Ascending aorta (tissue), 2 donors: ENCODE measurements at regions of chr7 and their contacts with region 1.

Region 1: DNA sequence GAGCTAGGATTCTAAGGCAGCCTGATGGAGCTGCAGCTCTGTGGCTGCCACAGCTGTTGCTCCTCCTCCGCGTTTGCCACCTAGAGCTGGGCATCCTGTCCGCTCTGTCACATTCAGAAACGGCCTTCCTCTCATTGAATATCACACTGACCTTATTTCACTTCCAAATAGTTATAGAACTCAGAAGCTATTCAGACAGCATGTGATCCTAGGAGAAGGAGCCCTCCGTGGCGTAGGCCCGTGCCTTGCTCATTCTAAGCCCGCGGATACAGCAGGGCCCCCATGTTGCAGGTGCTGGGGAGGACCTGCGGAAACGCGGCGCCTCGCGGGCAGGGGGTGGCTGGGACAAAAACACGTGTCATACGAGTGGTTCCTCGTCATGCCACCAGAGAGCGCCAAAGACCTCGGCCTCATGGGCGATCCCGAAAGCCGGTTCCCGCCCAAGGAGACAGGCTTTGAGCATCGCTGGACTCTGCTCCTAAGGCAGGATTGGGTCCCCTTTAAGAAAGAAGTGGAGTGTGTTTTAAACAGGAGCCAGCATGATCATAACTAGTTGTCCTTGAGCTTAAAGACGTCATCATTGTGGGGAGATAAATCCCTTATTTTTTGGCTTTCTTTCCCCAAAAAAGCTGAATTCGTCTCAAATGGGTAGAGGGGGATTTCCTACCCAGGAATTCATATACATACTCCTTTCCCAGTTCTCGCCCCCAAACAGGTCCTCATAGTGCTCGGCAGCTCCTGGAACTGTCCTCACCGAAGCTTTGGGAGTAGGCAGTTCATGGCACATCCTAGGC is 17.9 kb upstream of the FIGNL1 start:
- DNase-seq: peak; percentile 19 to 87
- H3K4me3 ChIP-seq: peak overlapping the region; percentile 14 to 19
- H3K27ac ChIP-seq: no peak overlapping the region
- H3K4me1 ChIP-seq: peaks cover 0 to 3% of the 10 kb centered on the region in 2 donors
- H3K27me3 ChIP-seq: no peaks in the 10 kb centered on the region
- CTCF ChIP-seq: peak; percentile 86 to 88 (median 86)

Region 2: DNA sequence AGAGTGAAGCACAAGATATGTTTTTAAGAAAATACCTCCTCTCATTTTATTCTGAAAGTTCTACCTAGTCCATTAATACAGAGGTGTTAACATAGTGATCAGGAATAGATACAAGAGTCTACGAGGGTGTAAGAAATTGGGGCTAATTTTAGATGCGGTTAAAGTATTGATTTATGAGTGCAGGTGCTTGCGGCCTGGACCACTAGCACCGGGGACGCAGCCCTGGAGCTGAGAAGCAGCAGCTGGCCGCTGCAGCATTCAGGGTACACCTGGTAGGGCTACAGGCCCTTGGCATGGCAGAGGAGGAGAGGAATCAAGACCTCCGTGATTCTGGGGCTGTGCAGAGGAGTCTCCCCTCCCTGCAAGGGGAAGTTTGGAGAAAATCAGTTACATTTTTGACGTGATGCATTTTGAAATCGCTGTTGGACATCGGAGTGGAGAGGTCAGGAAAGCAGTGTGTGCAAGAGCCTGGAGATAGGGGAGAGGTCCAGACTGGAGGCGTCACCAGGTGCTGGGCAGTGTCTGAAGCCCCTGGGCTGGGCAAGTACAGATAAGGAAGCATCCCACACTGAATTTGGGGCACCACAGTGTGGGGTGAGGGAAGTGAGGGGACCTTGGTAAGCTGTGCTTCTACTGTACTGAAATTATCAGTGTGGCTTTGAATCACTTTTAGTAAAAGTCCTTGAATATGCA is 582.3 kb before region 1 on chr7:
- intact Hi-C with region 1: no loop called
- DNase-seq: no peak
- H3K4me3 ChIP-seq: no peak overlapping the region
- H3K27ac ChIP-seq: no peak overlapping the region
- H3K4me1 ChIP-seq: no peaks in the 10 kb centered on the region
- H3K27me3 ChIP-seq: no peaks in the 10 kb centered on the region
- CTCF ChIP-seq: no peak

Region 3: GRCh38 chr7:50595491-50596102 is 127.6 kb after region 1 on chr7:
- intact Hi-C with region 1: loop called (anchors 5 kb)
- DNase-seq: no peak
- H3K4me3 ChIP-seq: no peak overlapping the region
- H3K27ac ChIP-seq: no peak overlapping the region
- H3K4me1 ChIP-seq: no peaks in the 10 kb centered on the region
- H3K27me3 ChIP-seq: no peaks in the 10 kb centered on the region
- CTCF ChIP-seq: peak; percentile 22 to 65 (median 49)

Region 4: GRCh38 chr7:50679218-50680007 is 211.4 kb after region 1 on chr7:
- intact Hi-C with region 1: loop called (anchors 1 kb)
- DNase-seq: no peak
- H3K4me3 ChIP-seq: no peak overlapping the region
- H3K27ac ChIP-seq: no peak overlapping the region
- H3K4me1 ChIP-seq: peaks cover 0 to 27% of the 10 kb centered on the region in 2 donors
- H3K27me3 ChIP-seq: no peaks in the 10 kb centered on the region
- CTCF ChIP-seq: peak; percentile 21 to 42 (median 34)

Region 5: DNA sequence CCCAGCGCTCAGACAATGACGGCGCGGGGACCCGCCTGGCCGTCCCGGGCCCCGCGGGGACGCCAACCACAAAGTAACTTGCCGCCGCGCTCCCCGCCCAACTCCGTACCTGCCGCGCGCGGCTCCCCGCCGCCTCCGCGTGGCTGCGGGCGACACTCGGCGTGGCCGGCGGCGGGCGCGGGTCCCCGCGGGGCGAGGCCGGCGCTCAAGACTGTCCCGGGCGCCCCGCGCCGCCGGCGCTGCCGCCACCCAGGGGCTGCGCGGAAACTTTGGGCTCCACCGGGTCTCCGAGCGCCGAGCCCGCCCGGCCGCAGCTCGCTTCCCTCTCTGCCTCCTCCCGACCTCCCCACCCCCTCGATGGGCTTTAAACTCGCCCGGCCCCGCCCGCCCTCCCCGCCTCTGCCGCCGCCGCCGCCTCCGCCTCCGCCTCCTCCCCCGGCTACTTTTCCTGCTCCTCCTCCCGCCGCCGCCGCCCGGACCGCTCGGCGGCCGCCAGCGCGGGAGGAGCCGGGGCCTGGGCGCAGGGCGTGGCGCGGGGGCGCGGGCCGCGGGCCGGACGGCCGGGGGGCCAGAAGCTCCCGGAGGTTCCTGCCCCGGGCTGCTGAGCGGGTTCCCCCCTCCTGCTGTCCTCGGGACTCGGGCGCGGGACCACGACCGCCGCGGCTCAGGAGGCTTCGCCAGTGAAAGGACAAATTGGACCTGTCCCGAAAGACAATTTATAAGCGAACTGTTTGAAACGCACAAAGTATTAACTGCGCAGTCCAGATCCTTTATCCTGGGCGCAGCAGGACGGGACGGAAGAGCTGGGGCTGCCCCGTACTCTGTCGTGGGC is 325.3 kb after region 1 on chr7:
- intact Hi-C with region 1: loop called (anchors 10 kb)
- DNase-seq: peak in 1 of 2 donors; percentile 80
- H3K4me3 ChIP-seq: peak overlapping the region; percentile 63 to 87
- H3K27ac ChIP-seq: peak overlapping the region; percentile 77 to 82
- H3K4me1 ChIP-seq: peaks cover 5 to 21% of the 10 kb centered on the region in 2 donors
- H3K27me3 ChIP-seq: no peaks in the 10 kb centered on the region
- CTCF ChIP-seq: no peak

Region 6: GRCh38 chr7:51067757-51068156 is 599.7 kb after region 1 on chr7:
- intact Hi-C with region 1: loop called (anchors 1 kb)
- DNase-seq: peak in 1 of 2 donors; percentile 71
- H3K4me3 ChIP-seq: peak overlapping the region in 1 of 2 donors; percentile 40
- H3K27ac ChIP-seq: no peak overlapping the region
- H3K4me1 ChIP-seq: no peaks in the 10 kb centered on the region
- H3K27me3 ChIP-seq: no peaks in the 10 kb centered on the region
- CTCF ChIP-seq: peak; percentile 23 to 71 (median 44)

Region 7: GRCh38 chr7:51141451-51142003 is 673.5 kb after region 1 on chr7:
- intact Hi-C with region 1: loop called (anchors 1 kb)
- DNase-seq: no peak
- H3K4me3 ChIP-seq: no peak overlapping the region
- H3K27ac ChIP-seq: no peak overlapping the region
- H3K4me1 ChIP-seq: no peaks in the 10 kb centered on the region
- H3K27me3 ChIP-seq: no peaks in the 10 kb centered on the region
- CTCF ChIP-seq: peak; percentile 10 to 72 (median 45)

Region 8: GRCh38 chr7:51162724-51163329 is 694.8 kb after region 1 on chr7:
- intact Hi-C with region 1: loop called (anchors 1 kb)
- DNase-seq: peak in 1 of 2 donors; percentile 73
- H3K4me3 ChIP-seq: no peak overlapping the region
- H3K27ac ChIP-seq: no peak overlapping the region
- H3K4me1 ChIP-seq: no peaks in the 10 kb centered on the region
- H3K27me3 ChIP-seq: no peaks in the 10 kb centered on the region
- CTCF ChIP-seq: peak; percentile 37 to 73 (median 70)